ENCODE measurements at regions of chr21 and their contacts with region 1.

Region 1: DNA sequence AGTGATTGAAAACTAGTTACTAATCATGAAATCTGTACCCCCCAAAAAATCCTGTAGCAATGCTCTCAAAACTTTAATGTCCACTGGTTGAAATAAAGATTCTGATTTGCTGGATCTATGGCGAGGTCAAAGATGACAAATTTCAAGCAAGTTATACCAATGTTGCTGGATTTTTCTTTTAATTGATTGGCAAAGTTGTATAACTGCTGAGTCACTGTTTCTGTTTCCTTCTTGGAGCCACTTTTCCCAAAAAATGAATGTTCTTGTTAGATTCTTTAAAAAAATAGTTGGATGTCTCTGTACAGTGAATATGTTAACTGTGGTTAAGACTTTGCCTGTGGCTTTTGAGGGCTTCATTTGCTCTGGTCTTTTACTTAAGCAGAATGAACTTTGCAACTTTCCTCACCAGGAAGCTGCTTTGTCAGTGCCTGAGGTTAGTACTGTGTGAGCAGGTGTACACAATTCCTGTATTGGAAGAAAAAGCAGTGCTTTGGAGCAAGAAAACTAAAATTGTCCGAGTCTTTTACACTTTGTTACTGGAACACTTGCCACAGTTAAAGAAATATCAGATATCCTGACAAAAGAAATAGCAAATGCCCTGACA is 1211.9 kb downstream of the MRPL39 start:
- DNase-seq: no peak
- ATAC-seq: no peak
- H3K4me3 ChIP-seq: no peak overlapping the region
- H3K4me3 Mint-ChIP-seq: no peak overlapping the region
- H3K27ac ChIP-seq: no peak overlapping the region
- H3K27ac Mint-ChIP-seq: no peak overlapping the region
- H3K4me1 ChIP-seq: no peaks in the 10 kb centered on the region
- H3K4me1 Mint-ChIP-seq: no peaks in the 10 kb centered on the region
- H3K27me3 ChIP-seq: no peaks in the 10 kb centered on the region
- H3K27me3 Mint-ChIP-seq: peaks cover 2% of the 10 kb centered on the region
- CTCF ChIP-seq: no peak

Region 2: DNA sequence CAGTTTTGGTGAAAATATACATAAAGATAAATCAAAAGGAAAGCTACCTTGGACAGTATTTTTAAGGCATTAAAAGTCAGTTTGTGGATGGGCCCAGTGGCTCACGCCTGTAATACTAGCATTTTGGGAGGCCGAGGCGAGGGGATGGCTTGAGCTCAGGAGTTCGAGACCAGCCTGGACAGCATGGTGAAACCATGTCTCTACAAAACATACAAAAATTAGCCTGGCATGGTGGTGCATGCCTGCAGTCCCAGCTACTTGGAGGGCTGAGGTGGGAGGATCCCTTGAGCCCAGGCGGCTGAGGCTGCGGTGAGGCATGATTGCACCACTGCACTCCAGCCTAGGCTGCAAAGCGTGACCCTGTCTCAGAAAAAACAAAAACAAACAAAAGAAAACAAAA is 41.9 kb before region 1 on chr21:
- CTCF ChIA-PET with region 1: no interaction called
- POLR2A ChIA-PET with region 1: no interaction called
- intact Hi-C with region 1: loop called in 1 of 2 experiments (anchors 1 kb)
- DNase-seq: no peak
- ATAC-seq: no peak
- H3K4me3 ChIP-seq: no peak overlapping the region
- H3K4me3 Mint-ChIP-seq: no peak overlapping the region
- H3K27ac ChIP-seq: no peak overlapping the region
- H3K27ac Mint-ChIP-seq: no peak overlapping the region
- H3K4me1 ChIP-seq: no peaks in the 10 kb centered on the region
- H3K4me1 Mint-ChIP-seq: no peaks in the 10 kb centered on the region
- H3K27me3 ChIP-seq: no peaks in the 10 kb centered on the region
- H3K27me3 Mint-ChIP-seq: no peaks in the 10 kb centered on the region
- CTCF ChIP-seq: no peak

Region 3: GRCh38 chr21:24411429-24411828 is 16.0 kb after region 1 on chr21:
- CTCF ChIA-PET with region 1: no interaction called
- POLR2A ChIA-PET with region 1: no interaction called
- intact Hi-C with region 1: no loop called
- DNase-seq: no peak
- ATAC-seq: no peak
- H3K4me3 ChIP-seq: no peak overlapping the region
- H3K4me3 Mint-ChIP-seq: no peak overlapping the region
- H3K27ac ChIP-seq: no peak overlapping the region
- H3K27ac Mint-ChIP-seq: no peak overlapping the region
- H3K4me1 ChIP-seq: no peaks in the 10 kb centered on the region
- H3K4me1 Mint-ChIP-seq: no peaks in the 10 kb centered on the region
- H3K27me3 ChIP-seq: no peaks in the 10 kb centered on the region
- H3K27me3 Mint-ChIP-seq: no peaks in the 10 kb centered on the region
- CTCF ChIP-seq: no peak

Measured in CD8-positive, alpha-beta T cell (primary cell).